Calu3 (cell line): ENCODE measurements at regions of chr3 and their contacts with region 1.

Region 1: DNA sequence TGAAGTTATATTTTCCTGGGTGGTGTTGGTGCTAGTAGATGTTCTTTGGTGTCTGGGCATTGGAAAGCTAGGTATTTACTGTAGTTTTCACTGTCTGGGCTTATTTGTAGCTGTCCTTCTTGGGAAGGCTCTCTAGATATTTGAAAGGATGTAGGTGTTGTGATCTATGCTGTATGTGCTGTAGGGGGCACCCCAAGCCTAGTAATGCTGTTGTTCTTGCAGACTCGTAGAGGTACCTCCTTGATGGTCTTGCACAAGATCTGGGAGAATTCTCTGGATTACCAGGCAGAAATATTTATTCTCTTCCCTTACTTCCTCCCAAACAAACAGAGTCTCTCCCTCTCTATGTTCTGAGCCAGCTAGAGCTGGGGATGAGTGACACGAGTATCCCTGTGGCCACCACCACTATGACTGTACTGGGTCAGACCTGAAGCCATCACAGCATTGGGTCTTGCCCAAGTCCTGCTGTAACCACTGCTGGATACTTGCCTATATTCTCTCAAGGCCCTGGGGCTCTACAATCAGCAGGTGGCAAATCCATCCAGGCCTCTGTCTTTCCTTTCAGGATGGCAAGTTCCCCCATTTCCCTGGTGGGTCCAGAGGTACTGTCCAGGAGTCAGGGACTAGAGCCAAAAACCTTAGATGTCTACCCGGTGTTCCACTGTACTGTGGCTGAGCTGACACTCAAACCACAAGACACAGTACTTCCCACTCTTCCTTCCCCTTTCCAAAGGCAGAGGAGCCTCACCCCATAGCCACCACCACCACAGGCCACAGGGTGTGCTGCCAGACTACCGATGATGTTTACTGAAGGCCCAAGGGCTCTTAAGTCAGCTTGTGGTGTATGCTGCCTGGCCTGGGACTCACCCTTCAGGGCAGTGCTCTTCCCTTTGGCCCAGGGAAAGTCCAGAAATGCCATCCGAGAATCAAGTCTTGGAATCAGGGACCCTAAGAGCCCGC is 195.2 kb upstream of the DPPA4 start:
- DNase-seq: peak; percentile 84
- H3K4me3 Mint-ChIP-seq: no peak overlapping the region
- H3K27ac Mint-ChIP-seq: peak overlapping the region; percentile 4
- H3K4me1 Mint-ChIP-seq: peaks cover 15% of the 10 kb centered on the region
- H3K27me3 Mint-ChIP-seq: no peaks in the 10 kb centered on the region
- CTCF ChIP-seq: peak; percentile 21

Region 2: GRCh38 chr3:109784852-109785631 is 252.5 kb after region 1 on chr3:
- CTCF ChIA-PET with region 1: no interaction called
- intact Hi-C with region 1: no loop called
- DNase-seq: no peak
- H3K4me3 Mint-ChIP-seq: no peak overlapping the region
- H3K27ac Mint-ChIP-seq: no peak overlapping the region
- H3K4me1 Mint-ChIP-seq: no peaks in the 10 kb centered on the region
- H3K27me3 Mint-ChIP-seq: no peaks in the 10 kb centered on the region
- CTCF ChIP-seq: no peak

Region 3: GRCh38 chr3:109806929-109807328 is 274.4 kb after region 1 on chr3:
- CTCF ChIA-PET with region 1: no interaction called
- intact Hi-C with region 1: loop called (anchors 5 kb)
- DNase-seq: peak; percentile 48
- H3K4me3 Mint-ChIP-seq: no peak overlapping the region
- H3K27ac Mint-ChIP-seq: peak overlapping the region; percentile 94
- H3K4me1 Mint-ChIP-seq: peaks cover 33% of the 10 kb centered on the region
- H3K27me3 Mint-ChIP-seq: no peaks in the 10 kb centered on the region
- CTCF ChIP-seq: no peak

Region 4: GRCh38 chr3:110314512-110315114 is 782.1 kb after region 1 on chr3:
- CTCF ChIA-PET with region 1: interaction called, 3 read pairs
- intact Hi-C with region 1: loop called (anchors 1 kb)
- DNase-seq: peak; percentile 56
- H3K4me3 Mint-ChIP-seq: no peak overlapping the region
- H3K27ac Mint-ChIP-seq: no peak overlapping the region
- H3K4me1 Mint-ChIP-seq: peaks cover 21% of the 10 kb centered on the region
- H3K27me3 Mint-ChIP-seq: no peaks in the 10 kb centered on the region
- CTCF ChIP-seq: peak; percentile 47